Motor neuron (in vitro differentiated cells): ENCODE measurements at regions of chr17 and their contacts with region 1.

Region 1: DNA sequence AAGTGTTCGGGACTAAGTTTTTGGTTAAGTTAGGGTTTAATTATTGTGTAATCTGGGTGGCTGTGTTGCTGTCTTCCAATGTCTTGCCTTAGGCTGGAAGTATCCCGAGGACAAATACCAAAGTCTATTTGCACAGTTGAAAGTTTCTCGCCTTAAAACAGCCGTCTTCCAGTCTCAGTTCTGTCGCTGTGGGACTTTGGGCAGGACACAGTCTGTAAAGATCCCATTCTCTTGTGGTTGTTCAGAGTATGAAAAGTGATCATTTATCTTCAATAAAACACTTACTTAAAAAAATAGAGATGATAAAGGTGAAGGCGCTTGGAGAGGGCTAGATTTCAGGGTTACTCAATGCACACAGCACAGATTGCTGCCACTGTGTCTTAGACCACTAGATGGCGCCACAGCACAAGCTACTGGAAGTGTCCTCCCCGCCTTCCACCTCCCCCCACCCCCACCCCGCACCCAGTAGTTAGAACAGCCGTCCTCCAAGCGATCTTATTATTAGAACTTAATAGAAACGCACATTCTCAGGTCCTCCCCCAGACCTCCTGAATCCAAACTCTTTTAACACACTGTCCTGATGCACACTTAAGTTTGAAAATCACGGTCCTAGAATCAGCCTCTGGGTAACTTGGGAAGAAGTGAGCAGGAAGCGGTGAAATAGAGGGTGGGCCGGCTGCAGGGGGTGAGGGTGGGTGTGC is 45.9 kb downstream of the AKAP1 start:
- ATAC-seq: peak; percentile 79 to 98 (median 86)
- H3K4me3 ChIP-seq: no peak overlapping the region
- H3K27ac ChIP-seq: no peak overlapping the region
- H3K4me1 ChIP-seq: peaks cover 18 to 23% of the 10 kb centered on the region in 2 donors

Region 2: GRCh38 chr17:57195785-57196460 is 65.0 kb after region 1 on chr17:
- in situ Hi-C with region 1: no loop called
- ATAC-seq: no peak
- H3K4me3 ChIP-seq: no peak overlapping the region
- H3K27ac ChIP-seq: no peak overlapping the region
- H3K4me1 ChIP-seq: no peaks in the 10 kb centered on the region

Region 3: GRCh38 chr17:57255776-57256681 is 125.1 kb after region 1 on chr17 and contains the start of gene MSI2:
- in situ Hi-C with region 1: no loop called
- ATAC-seq: peak; percentile 75 to 88 (median 84)
- H3K4me3 ChIP-seq: peak within 1 kb of the TSS; percentile 58 to 98 (median 74)
- H3K27ac ChIP-seq: peak within 1 kb of the TSS; percentile 84 to 89
- H3K4me1 ChIP-seq: peaks cover 26% of the 10 kb centered on the region in 2 donors
- total RNA-seq, gene MSI2: 33.0 to 114 (median 67.5) TPM

Region 4: DNA sequence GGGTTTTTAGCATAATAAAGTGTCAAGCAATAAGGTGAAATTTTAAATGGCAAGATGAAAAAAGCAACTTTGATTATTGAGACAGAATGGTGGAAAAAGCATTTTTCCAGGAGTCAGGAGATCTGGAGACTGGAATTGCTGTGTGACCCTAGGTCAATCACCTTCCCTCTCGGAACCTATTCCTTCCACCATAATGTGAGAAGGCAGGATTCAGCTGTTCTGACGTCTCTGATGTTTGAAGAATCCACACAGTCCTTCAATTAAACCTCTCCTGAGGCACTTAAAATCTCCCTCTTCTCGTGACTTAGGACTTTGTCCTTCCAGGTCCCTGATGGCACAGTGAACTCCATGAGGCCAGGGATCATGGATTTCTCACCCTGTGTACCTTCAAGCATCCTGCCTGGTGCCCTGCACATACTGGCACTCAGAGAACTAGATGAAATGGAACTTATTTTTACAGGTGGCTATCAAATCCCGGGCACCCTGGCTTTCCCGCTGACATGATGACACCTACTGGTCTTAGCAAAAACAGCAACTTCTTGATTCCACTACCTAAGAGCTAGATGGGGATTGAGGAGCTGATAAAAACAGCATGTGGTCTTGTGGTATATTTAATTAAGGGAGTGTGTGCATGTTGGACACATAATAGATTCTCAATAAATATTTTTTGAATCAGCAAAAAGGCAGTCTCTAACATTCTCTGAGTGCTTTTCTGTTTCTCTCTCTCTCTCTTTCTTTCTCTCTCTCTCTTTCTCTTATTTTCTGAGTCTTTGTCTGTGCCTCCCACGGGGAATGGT is 616.5 kb after region 1 on chr17:
- in situ Hi-C with region 1: loop called in 3 of 9 experiments (anchors 10 to 25 kb)
- ATAC-seq: peak in 7 of 8 experiments; percentile 28 to 89 (median 67)
- H3K4me3 ChIP-seq: no peak overlapping the region
- H3K27ac ChIP-seq: no peak overlapping the region
- H3K4me1 ChIP-seq: peaks cover 15% of the 10 kb centered on the region in 2 donors

Region 5: GRCh38 chr17:57810721-57811637 is 680.1 kb after region 1 on chr17:
- in situ Hi-C with region 1: loop called in 1 of 9 experiments (anchors 25 kb)
- ATAC-seq: peak in 7 of 8 experiments; percentile 11 to 80 (median 71)
- H3K4me3 ChIP-seq: no peak overlapping the region
- H3K27ac ChIP-seq: peak overlapping the region in 1 of 2 donors; percentile 31
- H3K4me1 ChIP-seq: peaks cover 27 to 39% of the 10 kb centered on the region in 2 donors